ENCODE measurements at regions of chr2 and their contacts with region 1.

Region 1: DNA sequence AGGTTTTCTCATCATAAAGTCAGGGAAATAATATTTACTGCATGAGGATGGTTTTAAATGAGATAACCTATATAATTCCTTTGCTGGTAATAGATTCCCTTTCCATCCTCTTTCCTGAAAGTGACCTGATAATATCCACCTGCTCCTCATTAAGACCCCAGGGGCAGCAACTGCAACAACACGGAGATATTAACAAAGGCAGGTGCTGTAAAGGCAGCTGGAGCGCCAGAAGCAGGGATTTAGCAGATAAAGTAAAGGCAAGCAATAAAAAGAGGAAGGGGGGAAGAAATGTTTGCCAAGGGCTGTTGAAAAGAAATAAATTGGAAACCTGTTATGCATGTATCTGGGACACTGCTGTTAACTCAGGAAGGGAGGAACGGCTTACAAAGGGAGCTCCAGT is 472.6 kb upstream of the KLHL29 start:
- DNase-seq: no peak
- ATAC-seq: no peak
- H3K4me3 ChIP-seq: no peak overlapping the region
- H3K27ac ChIP-seq: no peak overlapping the region
- H3K4me1 ChIP-seq: no peaks in the 10 kb centered on the region
- H3K27me3 ChIP-seq: no peaks in the 10 kb centered on the region
- CTCF ChIP-seq: no peak
- POLR2A ChIP-seq: no peak

Region 2: GRCh38 chr2:22525681-22526080 is 386.7 kb before region 1 on chr2:
- intact Hi-C with region 1: no loop called
- DNase-seq: no peak
- ATAC-seq: no peak
- H3K4me3 ChIP-seq: no peak overlapping the region
- H3K27ac ChIP-seq: no peak overlapping the region
- H3K4me1 ChIP-seq: no peaks in the 10 kb centered on the region
- H3K27me3 ChIP-seq: no peaks in the 10 kb centered on the region
- CTCF ChIP-seq: no peak
- POLR2A ChIP-seq: no peak

Region 3: GRCh38 chr2:23346029-23346428 is 433.6 kb after region 1 on chr2:
- intact Hi-C with region 1: loop called in 3 of 10 experiments (anchors 10 kb)
- DNase-seq: no peak
- ATAC-seq: no peak
- H3K4me3 ChIP-seq: no peak overlapping the region
- H3K27ac ChIP-seq: no peak overlapping the region
- H3K4me1 ChIP-seq: peaks cover 0 to 7% (median 0%) of the 10 kb centered on the region in 12 donors
- H3K27me3 ChIP-seq: no peaks in the 10 kb centered on the region
- CTCF ChIP-seq: no peak
- POLR2A ChIP-seq: no peak

Region 4: GRCh38 chr2:23445450-23445868 is 533.1 kb after region 1 on chr2:
- intact Hi-C with region 1: no loop called
- DNase-seq: no peak
- ATAC-seq: no peak
- H3K4me3 ChIP-seq: no peak overlapping the region
- H3K27ac ChIP-seq: no peak overlapping the region
- H3K4me1 ChIP-seq: peaks cover 0 to 24% (median 0%) of the 10 kb centered on the region in 12 donors
- H3K27me3 ChIP-seq: peaks cover 0 to 4% (median 0%) of the 10 kb centered on the region in 9 donors
- CTCF ChIP-seq: no peak
- POLR2A ChIP-seq: no peak

Measured in heart left ventricle (tissue), 16 donors.